ENCODE measurements at regions of chr16 and their contacts with region 1.

Region 1: GRCh38 chr16:22190776-22191531 is 15.1 kb upstream of the EEF2K start:
- DNase-seq: peak; percentile 98

Region 2: GRCh38 chr16:22007509-22008214 is 183.3 kb before region 1 on chr16 and contains the start of gene MOSMO:
- in situ Hi-C with region 1: loop called (anchors 25 kb)
- DNase-seq: peak; percentile 76

Region 3: GRCh38 chr16:22077700-22078313 is 113.1 kb before region 1 on chr16:
- in situ Hi-C with region 1: loop called (anchors 25 kb)
- DNase-seq: peak; percentile 55

Region 4: GRCh38 chr16:22123146-22123545 is 67.8 kb before region 1 on chr16:
- in situ Hi-C with region 1: no loop called
- DNase-seq: no peak

Region 5: GRCh38 chr16:22151246-22151998 is 39.5 kb before region 1 on chr16:
- in situ Hi-C with region 1: no loop called
- DNase-seq: no peak